Panc1 (cell line): ENCODE measurements at regions of chr9 and their contacts with region 1.

Region 1: GRCh38 chr9:110173322-110173642 is 34.7 kb downstream of the C9orf152 start:
- DNase-seq: no peak
- ATAC-seq: no peak
- H3K4me3 ChIP-seq: no peak overlapping the region
- H3K27ac ChIP-seq: no peak overlapping the region
- H3K4me1 ChIP-seq: no peaks in the 10 kb centered on the region
- H3K27me3 ChIP-seq: no peaks in the 10 kb centered on the region
- CTCF ChIP-seq: no peak

Region 2: GRCh38 chr9:110197330-110198187 is 24.3 kb after region 1 on chr9:
- CTCF ChIA-PET with region 1: no interaction called
- POLR2A ChIA-PET with region 1: no interaction called
- in situ Hi-C with region 1: no loop called
- intact Hi-C with region 1: no loop called
- DNase-seq: no peak
- ATAC-seq: no peak
- H3K4me3 ChIP-seq: no peak overlapping the region
- H3K27ac ChIP-seq: no peak overlapping the region
- H3K4me1 ChIP-seq: 0 out of 2 replicates have a peak, but pooled peaks cover 3% of the 10 kb centered on the region
- H3K27me3 ChIP-seq: no peaks in the 10 kb centered on the region
- CTCF ChIP-seq: no peak

Region 3: DNA sequence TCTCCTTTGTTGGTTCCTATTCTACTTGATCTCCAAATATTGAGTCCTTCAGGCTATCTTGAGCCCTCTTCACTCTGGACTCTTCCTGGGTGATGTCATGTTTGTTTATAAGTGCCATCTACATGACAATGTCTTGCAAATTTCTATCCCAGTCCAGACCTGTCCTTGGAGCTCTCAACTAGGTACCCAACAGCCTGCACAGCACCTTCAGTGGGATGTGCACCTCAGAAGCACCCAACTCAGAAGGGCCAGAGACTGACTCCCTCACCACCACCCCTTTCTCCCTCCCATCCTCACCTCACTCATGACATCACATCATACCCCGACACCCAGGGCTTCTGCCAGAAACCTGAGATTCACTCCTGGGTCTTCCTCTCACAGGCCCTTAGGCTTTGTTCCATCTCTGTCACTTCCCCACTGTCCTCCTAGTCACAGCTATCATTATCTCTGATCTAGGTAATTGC is 68.6 kb after region 1 on chr9:
- CTCF ChIA-PET with region 1: no interaction called
- POLR2A ChIA-PET with region 1: no interaction called
- in situ Hi-C with region 1: no loop called
- intact Hi-C with region 1: no loop called
- DNase-seq: no peak
- ATAC-seq: no peak
- H3K4me3 ChIP-seq: no peak overlapping the region
- H3K27ac ChIP-seq: no peak overlapping the region
- H3K4me1 ChIP-seq: no peaks in the 10 kb centered on the region
- H3K27me3 ChIP-seq: no peaks in the 10 kb centered on the region
- CTCF ChIP-seq: no peak

Region 4: DNA sequence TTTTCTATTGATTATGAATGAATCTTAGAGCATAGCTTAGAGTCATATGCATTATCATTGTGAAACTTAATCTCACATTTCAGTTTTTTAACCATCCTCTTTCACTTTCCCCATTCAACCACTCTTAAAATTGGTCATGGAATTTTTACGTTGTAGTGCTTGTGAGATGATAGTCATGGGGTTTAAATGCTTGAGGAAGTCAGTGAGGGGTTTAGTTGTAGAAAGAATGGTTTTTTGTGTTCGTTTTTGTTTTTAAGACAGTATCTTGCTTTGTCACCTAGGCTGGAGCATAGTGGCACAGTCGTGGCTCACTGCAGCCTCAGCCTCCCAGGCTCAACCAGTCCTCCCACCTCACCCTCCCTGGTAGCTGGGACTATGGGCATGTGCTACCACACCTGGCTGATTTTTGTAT is 1743.0 kb after region 1 on chr9:
- CTCF ChIA-PET with region 1: interaction called, 10 read pairs
- POLR2A ChIA-PET with region 1: no interaction called
- in situ Hi-C with region 1: no loop called
- intact Hi-C with region 1: no loop called
- DNase-seq: no peak
- ATAC-seq: no peak
- H3K4me3 ChIP-seq: no peak overlapping the region
- H3K27ac ChIP-seq: peak overlapping the region; percentile 52; the same call in 1 of the 2 replicates
- H3K4me1 ChIP-seq: peaks cover 41% of the 10 kb centered on the region
- H3K27me3 ChIP-seq: no peaks in the 10 kb centered on the region
- CTCF ChIP-seq: no peak